Lower leg skin (tissue), 4 donors: ENCODE measurements at regions of chr4 and their contacts with region 1.

Region 1: DNA sequence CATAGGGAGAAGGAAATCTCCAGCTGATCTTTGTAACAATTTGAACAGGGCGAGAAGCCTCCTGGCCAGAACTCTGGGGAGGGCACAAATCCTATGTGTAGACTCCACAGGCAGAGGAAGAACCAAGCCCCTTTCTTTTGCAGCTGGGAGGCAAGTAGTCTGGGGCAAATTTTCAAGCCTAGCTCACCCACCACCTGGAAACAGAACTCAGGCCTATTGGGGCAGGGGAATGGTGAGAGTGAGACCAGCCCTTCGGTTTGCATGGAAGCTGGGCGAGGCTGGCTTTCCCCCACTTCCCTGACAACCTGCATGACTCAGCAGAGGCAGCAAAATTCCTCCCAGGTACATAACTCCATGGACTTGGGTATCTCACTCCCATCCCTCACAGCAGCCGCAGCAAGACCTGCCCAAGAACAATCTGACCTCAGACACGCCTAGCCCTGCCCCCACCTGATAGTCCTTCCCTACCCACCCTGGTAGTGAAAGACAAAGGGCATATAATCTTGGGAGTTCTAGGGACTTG is 138.2 kb downstream of the EMCN start:
- DNase-seq: no peak
- H3K4me3 ChIP-seq: no peak overlapping the region
- CTCF ChIP-seq: no peak
- POLR2A ChIP-seq: no peak

Region 2: DNA sequence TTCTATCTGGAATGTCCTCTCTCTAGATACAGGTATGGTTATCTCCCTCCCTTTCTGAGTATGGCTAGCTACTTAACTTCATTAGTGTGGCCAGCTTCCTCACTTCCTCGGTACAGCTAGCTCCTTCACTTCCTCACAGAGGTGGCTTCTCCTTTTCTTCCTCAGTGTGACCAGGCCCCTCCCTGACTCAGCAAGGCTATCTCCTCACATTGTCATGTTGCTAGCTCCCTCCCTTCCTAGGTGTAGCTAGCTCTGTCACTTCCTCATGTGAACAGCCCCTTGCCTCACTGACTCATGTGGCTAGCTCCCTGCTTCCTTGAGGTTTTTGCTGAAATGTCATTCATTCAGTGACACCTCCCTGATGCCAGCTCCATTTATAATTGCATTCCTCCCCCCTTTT is 122.1 kb before region 1 on chr4:
- intact Hi-C with region 1: no loop called
- DNase-seq: no peak
- H3K4me3 ChIP-seq: no peak overlapping the region
- CTCF ChIP-seq: no peak
- POLR2A ChIP-seq: no peak

Region 3: DNA sequence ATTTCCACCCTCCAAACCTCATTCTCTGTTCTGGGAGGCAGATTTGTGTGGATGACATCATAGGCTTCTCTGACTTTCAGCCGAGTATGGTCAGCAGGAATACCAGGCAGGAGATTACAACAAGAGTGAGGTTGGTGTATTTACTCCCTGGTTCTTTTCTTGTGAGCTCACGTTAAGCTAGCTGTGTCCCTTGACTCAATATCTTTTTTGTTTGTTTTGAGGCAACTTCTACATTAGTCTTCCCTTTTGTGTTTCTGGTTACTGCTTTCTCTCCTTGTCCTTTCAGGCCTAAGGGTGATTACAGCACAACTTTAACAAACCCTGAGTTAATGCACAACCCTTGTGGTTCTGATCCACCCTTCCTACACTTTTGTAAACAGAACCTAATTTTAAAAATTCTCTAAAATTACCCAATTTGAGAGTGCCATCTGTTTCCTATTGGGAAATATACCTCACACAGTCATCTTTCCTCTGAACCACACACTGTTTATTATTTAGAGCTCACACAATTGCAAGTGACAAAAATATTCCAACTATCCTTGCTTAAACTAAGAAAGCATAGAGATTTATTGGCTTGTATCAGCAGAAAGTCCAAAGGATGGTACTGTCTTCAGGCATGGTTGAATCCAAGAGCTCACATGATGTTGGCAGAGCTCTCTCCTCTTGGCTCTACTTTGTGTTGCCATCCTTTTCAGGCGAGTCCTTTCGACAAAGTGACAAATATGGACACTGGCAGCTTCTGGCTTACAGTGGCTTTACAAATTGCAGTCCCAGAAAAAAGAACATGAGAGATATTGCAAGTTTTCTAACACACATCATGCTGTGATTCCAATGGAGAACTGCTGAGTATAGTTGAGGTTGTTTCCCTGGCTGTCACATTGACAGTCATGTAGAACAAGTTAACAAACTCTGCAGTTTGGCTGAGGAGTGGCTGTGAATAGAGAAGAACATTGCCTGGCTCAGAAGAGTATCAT is 38.8 kb before region 1 on chr4:
- intact Hi-C with region 1: loop called (anchors 2 kb)
- DNase-seq: peak in 1 of 2 donors; percentile 16
- H3K4me3 ChIP-seq: no peak overlapping the region
- CTCF ChIP-seq: no peak
- POLR2A ChIP-seq: no peak